Natural killer cell (primary cell): ENCODE measurements at regions of chr1 and their contacts with region 1.

Region 1: GRCh38 chr1:228825840-228826484 is 90.7 kb downstream of the RHOU start:
- DNase-seq: peak in 1 of 2 donors; percentile 16
- ATAC-seq: peak in 2 of 3 donors; percentile 44 to 64
- H3K4me3 ChIP-seq: no peak overlapping the region
- H3K4me3 Mint-ChIP-seq: no peak overlapping the region
- H3K27ac ChIP-seq: no peak overlapping the region
- H3K27ac Mint-ChIP-seq: no peak overlapping the region
- H3K4me1 ChIP-seq: peaks cover 10% of the 10 kb centered on the region
- H3K4me1 Mint-ChIP-seq: peaks cover 10 to 12% of the 10 kb centered on the region in 2 donors
- H3K27me3 ChIP-seq: peaks cover 6% of the 10 kb centered on the region
- H3K27me3 Mint-ChIP-seq: peaks cover 8 to 46% of the 10 kb centered on the region in 2 donors
- CTCF ChIP-seq: no peak

Region 2: DNA sequence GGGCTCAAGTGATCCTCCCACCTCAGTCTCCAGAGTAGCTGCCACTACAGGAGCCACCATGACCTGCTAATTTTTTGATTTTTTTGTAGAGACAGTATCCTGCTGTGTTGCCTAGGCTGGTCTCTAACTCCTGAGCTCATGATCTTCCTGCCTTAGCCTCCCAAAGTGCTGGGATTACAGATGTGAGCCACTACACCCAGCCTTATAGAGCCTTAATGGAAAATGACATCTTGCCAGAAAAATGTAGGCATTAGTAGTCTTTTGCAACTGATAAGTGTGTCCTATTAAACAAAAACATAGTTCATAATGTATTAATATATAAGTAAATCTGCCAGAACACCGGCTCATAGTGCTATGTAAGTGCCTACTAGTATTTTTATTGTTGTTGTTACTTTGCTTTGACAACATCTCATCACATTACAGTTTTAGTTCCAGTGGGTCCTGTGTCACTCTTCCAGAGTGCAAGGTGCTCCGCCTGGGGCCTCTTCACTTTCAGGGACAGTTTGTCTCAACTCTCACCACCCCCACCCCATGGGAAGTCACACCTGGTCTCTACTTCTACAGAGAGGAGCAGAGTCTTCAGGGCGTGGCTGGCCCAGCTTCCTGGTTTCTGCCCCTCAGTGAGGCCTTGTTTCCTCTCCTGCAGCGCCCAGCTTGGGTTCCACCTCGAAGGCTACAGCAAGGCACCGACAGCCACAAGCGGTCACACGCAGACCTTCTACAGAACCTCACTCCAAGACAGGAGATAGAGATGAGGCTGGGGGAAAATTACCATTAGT is 60.6 kb before region 1 on chr1:
- intact Hi-C with region 1: loop called (anchors 10 kb)
- DNase-seq: peak in 1 of 2 donors; percentile 62
- ATAC-seq: peak; percentile 49 to 69 (median 66)
- H3K4me3 ChIP-seq: no peak overlapping the region
- H3K4me3 Mint-ChIP-seq: peak overlapping the region; percentile 47
- H3K27ac ChIP-seq: peak overlapping the region; percentile 17
- H3K27ac Mint-ChIP-seq: peak overlapping the region; percentile 78 to 81
- H3K4me1 ChIP-seq: peaks cover 21% of the 10 kb centered on the region
- H3K4me1 Mint-ChIP-seq: peaks cover 26% of the 10 kb centered on the region in 2 donors
- H3K27me3 ChIP-seq: no peaks in the 10 kb centered on the region
- H3K27me3 Mint-ChIP-seq: peaks cover 7 to 8% of the 10 kb centered on the region in 2 donors
- CTCF ChIP-seq: no peak